ENCODE measurements at regions of chr1 and their contacts with region 1.

Region 1: DNA sequence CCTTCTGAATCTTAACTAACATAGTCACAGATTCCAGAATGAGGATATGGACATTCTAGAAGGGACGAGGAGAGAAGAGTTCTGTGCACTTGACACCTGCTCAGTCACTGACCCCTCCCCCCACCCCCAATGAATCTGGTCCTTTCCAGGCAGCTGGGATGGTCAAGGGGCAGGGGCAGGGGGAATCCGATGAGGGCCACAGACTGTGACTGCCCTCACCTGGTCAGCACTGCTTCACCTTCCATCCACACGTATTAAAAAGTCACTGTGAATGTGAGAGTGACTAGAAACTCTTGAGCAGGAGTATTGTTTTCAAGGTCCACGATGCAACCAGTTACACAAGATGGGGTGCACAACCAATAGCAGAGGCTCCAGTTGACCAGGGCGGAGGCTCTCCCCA is 9.5 kb upstream of the PRAMEF12 start:
- DNase-seq: no peak

Region 2: DNA sequence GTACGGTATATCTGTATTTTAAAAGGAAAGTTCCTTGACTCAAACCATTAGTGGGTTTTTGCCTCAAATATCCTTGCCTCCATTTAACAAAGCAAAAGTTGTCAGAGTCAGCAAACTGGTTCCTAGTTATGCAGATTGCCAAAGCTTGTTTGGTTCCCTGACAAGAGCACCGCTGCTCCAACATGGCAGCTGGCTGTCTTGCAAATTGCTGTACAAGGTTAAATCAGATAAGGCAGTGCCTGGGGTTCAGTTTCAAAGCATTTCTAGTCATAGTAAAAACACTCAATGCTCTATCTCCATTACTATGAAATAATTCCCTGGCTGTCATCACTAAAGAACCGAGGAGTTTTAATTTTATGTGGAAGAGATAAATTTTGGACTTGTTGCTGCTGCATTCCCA is 29.4 kb before region 1 on chr1:
- intact Hi-C with region 1: loop called in 1 of 2 experiments (anchors 1 kb)
- DNase-seq: no peak

Measured in posterior vena cava (tissue), 2 donors.